CD8-positive, alpha-beta T cell (primary cell): ENCODE measurements at regions of chr7 and their contacts with region 1.

Region 1: DNA sequence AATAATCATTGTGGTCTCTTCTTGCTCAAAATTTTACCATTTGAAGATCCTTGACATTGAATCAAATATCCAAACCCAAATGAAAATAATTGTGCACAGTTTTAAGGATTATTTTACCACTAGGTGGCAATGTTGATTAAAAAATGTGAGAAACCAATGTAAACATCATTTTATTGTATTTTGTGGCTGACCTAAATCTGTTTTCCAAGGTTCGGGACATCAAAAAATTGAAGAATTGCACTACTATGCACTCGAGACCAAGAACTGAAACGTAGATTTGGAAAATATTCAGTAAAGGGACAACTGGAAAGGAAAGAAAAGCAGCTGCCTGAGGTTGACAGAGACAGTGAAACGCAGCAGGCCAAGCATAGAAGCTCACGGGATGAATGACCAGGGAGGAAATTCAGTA is 259.3 kb downstream of the SNX13 start:
- DNase-seq: peak in 2 of 9 experiments; percentile 18 to 36
- ATAC-seq: no peak
- H3K4me3 ChIP-seq: no peak overlapping the region
- H3K4me3 Mint-ChIP-seq: no peak overlapping the region
- H3K27ac ChIP-seq: no peak overlapping the region
- H3K27ac Mint-ChIP-seq: no peak overlapping the region
- H3K4me1 ChIP-seq: no peaks in the 10 kb centered on the region
- H3K4me1 Mint-ChIP-seq: no peaks in the 10 kb centered on the region
- H3K27me3 ChIP-seq: no peaks in the 10 kb centered on the region
- H3K27me3 Mint-ChIP-seq: no peaks in the 10 kb centered on the region
- CTCF ChIP-seq: peak; percentile 75

Region 2: DNA sequence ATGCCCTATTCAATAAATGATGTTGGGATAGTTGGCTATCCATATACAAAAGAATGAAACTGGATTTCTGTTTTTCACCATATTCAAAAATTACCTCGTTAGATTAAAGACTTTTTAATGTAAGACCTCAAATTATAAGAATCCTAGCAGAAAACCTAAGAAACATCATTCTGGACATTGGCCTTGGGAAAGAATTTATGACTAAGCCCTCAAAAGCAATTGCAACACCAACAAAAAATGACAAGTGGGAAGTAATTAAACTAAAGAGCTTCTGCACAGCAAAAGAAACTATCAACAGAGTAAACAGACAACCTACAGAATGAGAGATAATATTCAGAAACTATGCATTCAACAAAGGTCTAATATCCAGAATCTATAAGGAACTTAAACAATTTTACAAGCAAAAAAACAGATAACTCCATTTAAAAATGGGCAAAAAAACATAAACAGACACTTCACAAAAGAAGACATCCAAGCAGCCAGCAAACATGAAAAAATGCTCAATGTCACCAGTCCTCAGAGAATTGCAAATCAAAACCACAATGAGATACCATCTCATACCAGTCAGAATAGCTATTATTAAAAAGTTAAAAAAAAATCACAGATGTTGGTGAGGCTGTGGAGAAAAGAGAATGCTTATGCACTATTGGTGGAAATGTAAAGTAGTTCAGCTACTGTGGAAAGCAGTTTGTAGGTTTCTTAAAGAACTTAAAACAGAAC is 72.7 kb before region 1 on chr7:
- CTCF ChIA-PET with region 1: no interaction called
- POLR2A ChIA-PET with region 1: no interaction called
- intact Hi-C with region 1: no loop called
- DNase-seq: no peak
- ATAC-seq: no peak
- H3K4me3 ChIP-seq: no peak overlapping the region
- H3K4me3 Mint-ChIP-seq: no peak overlapping the region
- H3K27ac ChIP-seq: no peak overlapping the region
- H3K27ac Mint-ChIP-seq: no peak overlapping the region
- H3K4me1 ChIP-seq: no peaks in the 10 kb centered on the region
- H3K4me1 Mint-ChIP-seq: no peaks in the 10 kb centered on the region
- H3K27me3 ChIP-seq: no peaks in the 10 kb centered on the region
- H3K27me3 Mint-ChIP-seq: peaks cover 5% of the 10 kb centered on the region
- CTCF ChIP-seq: no peak

Region 3: GRCh38 chr7:18666107-18666728 is 985.3 kb after region 1 on chr7:
- CTCF ChIA-PET with region 1: interaction called, 8 read pairs
- POLR2A ChIA-PET with region 1: no interaction called
- intact Hi-C with region 1: loop called (anchors 1 to 2 kb)
- DNase-seq: peak; percentile 13 to 76 (median 59)
- ATAC-seq: peak; percentile 46
- H3K4me3 ChIP-seq: no peak overlapping the region
- H3K4me3 Mint-ChIP-seq: no peak overlapping the region
- H3K27ac ChIP-seq: no peak overlapping the region
- H3K27ac Mint-ChIP-seq: no peak overlapping the region
- H3K4me1 ChIP-seq: no peaks in the 10 kb centered on the region
- H3K4me1 Mint-ChIP-seq: peaks cover 3% of the 10 kb centered on the region
- H3K27me3 ChIP-seq: no peaks in the 10 kb centered on the region
- H3K27me3 Mint-ChIP-seq: no peaks in the 10 kb centered on the region
- CTCF ChIP-seq: peak; percentile 79

Region 4: GRCh38 chr7:19051767-19052375 is 1370.9 kb after region 1 on chr7:
- CTCF ChIA-PET with region 1: no interaction called
- POLR2A ChIA-PET with region 1: no interaction called
- intact Hi-C with region 1: loop called in 1 of 2 experiments (anchors 10 kb)
- DNase-seq: peak in 4 of 9 experiments; percentile 11 to 35 (median 19)
- ATAC-seq: no peak
- H3K4me3 ChIP-seq: no peak overlapping the region
- H3K4me3 Mint-ChIP-seq: no peak overlapping the region
- H3K27ac ChIP-seq: no peak overlapping the region
- H3K27ac Mint-ChIP-seq: no peak overlapping the region
- H3K4me1 ChIP-seq: no peaks in the 10 kb centered on the region
- H3K4me1 Mint-ChIP-seq: no peaks in the 10 kb centered on the region
- H3K27me3 ChIP-seq: no peaks in the 10 kb centered on the region
- H3K27me3 Mint-ChIP-seq: no peaks in the 10 kb centered on the region
- CTCF ChIP-seq: peak; percentile 77

Region 5: DNA sequence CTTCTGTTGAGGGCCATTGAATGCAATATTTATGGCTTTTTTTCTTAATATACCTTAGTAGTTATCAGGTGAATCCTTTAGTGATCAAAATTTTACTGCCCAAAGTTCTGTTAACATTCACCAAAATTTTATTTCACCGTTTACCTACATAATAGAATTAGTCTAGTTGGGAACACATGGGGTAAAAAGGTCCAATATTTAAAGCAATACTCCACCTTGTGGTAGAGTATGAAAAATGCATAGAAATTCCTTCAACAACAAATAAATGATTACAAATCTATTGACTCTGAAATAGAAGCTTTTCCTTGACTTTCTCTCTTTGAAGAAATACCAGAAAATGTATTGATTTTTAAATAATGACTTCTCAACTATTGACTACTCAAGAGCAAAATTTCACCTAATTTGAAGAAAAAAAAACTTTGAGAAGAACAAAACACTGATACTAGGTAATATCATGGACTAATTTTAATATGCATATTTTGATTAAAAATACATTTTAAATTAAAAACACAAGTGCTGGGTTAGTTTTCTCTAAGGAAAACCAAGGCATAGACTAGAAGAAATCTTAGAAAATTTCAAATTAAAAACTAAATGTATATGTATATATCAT is 1984.6 kb after region 1 on chr7:
- CTCF ChIA-PET with region 1: interaction called, 5 read pairs
- POLR2A ChIA-PET with region 1: no interaction called
- intact Hi-C with region 1: loop called in 1 of 2 experiments (anchors 1 kb)
- DNase-seq: peak in 2 of 9 experiments; percentile 11 to 32
- ATAC-seq: no peak
- H3K4me3 ChIP-seq: no peak overlapping the region
- H3K4me3 Mint-ChIP-seq: no peak overlapping the region
- H3K27ac ChIP-seq: no peak overlapping the region
- H3K27ac Mint-ChIP-seq: no peak overlapping the region
- H3K4me1 ChIP-seq: no peaks in the 10 kb centered on the region
- H3K4me1 Mint-ChIP-seq: peaks cover 12% of the 10 kb centered on the region
- H3K27me3 ChIP-seq: no peaks in the 10 kb centered on the region
- H3K27me3 Mint-ChIP-seq: peaks cover 3% of the 10 kb centered on the region
- CTCF ChIP-seq: peak; percentile 75